ENCODE measurements at regions of chr5 and their contacts with region 1.

Region 1: GRCh38 chr5:67648201-67648671 is 451.6 kb upstream of the CD180 start:
- DNase-seq: peak; percentile 81

Region 2: DNA sequence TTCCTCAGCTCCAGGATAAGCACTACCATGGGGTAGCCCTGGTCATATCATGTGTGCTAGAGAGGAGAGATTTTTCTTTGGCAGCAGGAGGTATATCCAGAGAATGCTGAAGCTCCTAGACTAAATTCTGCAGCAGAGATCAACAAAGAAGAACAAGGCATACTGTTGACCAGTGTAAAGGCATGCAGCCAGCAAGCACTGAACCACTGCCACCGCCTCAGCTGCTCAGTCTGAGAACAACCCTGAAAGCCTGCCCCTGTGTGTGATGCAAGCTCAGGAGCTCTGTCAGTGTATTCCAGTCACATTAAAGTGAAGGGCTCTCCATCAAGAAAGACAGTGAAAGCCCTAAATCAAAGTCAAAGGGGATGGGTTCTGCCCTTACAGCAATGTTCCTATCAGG is 12.1 kb before region 1 on chr5:
- intact Hi-C with region 1: no loop called
- DNase-seq: no peak

Region 3: GRCh38 chr5:67693956-67694809 is 45.9 kb after region 1 on chr5:
- intact Hi-C with region 1: loop called (anchors 5 kb)
- DNase-seq: peak; percentile 81

Region 4: DNA sequence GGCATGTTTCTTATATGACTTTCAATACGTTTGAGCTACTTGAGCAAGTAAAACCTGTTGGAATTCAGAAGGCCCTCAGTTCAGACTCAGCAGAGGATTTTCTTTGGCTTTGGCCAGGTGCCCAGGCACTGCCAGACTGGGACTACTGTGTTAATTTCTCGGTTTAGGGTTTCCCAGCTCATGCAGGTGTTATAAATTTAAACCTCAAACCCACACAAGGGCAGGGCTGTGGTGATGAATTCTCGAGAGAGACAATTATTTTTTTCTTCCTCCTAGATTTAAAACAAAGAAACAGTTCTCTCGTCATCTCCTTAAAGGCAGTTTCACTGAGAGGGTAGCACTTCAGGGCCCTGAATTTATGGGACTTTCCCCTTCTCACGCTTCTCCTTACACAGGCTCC is 161.4 kb after region 1 on chr5:
- intact Hi-C with region 1: loop called (anchors 2 kb)
- DNase-seq: no peak

Region 5: DNA sequence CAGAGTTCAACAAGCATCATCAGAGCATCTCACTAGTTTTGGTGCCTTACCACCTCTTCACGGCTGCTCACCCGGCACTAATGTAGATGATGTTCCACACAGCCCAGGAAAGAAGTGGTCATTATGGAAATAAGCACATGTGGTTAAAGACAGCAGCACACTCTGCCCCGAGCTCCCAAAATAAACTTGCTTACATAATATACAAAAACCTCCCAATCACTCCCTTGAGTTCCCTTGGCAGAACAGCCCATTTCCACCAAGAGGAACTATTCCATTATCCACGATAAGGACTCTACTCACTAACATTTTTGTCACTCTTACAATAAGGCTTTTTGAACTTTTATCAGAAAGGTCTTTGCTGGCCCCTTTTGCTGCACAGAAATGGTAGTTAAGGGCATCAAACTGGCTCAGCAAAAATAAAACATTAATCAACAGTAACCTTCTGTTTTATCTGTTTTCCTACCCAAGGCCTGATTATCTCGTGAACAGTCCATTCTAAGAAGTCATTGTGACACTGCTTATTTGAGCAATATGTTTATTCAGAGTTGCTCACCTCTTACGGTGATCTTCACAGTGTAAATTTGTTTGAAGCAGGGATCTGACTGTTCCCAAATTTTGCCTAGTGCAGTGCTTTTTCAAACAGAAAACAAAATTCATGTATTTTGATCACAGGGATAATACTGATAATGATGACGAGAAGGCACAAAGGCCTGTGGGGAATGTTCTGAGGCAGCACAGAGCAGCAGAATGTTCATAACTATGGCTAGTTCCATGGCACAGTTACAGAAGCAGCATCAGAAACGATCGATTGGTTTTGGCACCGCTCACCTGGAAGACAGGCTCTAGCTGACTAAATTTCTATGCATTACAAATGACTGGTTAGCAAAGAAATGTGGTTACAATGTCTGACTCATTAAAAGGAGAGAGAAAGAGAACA is 167.5 kb after region 1 on chr5:
- intact Hi-C with region 1: loop called (anchors 2 kb)
- DNase-seq: no peak